A673 (cell line): ENCODE measurements at regions of chr4 and their contacts with region 1.

Region 1: GRCh38 chr4:101321481-101322042 is 25.8 kb downstream of the PPP3CA start:
- DNase-seq: no peak
- H3K4me3 ChIP-seq: no peak overlapping the region
- H3K27ac ChIP-seq: peak overlapping the region; percentile 90
- H3K4me1 ChIP-seq: peaks cover 60% of the 10 kb centered on the region
- H3K27me3 ChIP-seq: no peaks in the 10 kb centered on the region
- CTCF ChIP-seq: no peak

Region 2: DNA sequence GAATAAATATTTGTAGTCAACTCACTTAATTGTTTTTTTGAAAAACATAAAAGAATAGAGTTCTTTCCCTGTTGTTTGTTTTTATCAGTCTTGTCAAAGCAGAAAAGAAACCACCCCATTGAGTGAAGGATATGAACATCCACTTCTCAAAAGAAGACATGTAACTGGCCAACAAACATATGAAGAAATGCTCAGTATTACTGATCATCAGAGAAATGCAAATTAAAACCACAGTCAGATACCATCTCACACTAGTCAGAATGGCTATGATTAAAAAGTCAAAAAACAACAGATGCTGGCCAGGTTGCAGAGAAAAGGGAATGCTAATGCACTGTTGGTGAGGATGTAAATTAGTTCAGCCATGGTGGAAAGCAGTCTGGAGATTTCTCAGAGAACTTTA is 477.7 kb before region 1 on chr4:
- CTCF ChIA-PET with region 1: no interaction called
- POLR2A ChIA-PET with region 1: no interaction called
- intact Hi-C with region 1: no loop called
- DNase-seq: no peak
- H3K4me3 ChIP-seq: no peak overlapping the region
- H3K27ac ChIP-seq: no peak overlapping the region
- H3K4me1 ChIP-seq: no peaks in the 10 kb centered on the region
- H3K27me3 ChIP-seq: no peaks in the 10 kb centered on the region
- CTCF ChIP-seq: no peak

Region 3: GRCh38 chr4:101037938-101038413 is 283.6 kb before region 1 on chr4:
- CTCF ChIA-PET with region 1: no interaction called
- POLR2A ChIA-PET with region 1: no interaction called
- intact Hi-C with region 1: loop called (anchors 5 kb)
- DNase-seq: peak; percentile 97
- H3K4me3 ChIP-seq: no peak overlapping the region
- H3K27ac ChIP-seq: peak overlapping the region; percentile 14
- H3K4me1 ChIP-seq: peaks cover 45% of the 10 kb centered on the region
- H3K27me3 ChIP-seq: no peaks in the 10 kb centered on the region
- CTCF ChIP-seq: no peak

Region 4: DNA sequence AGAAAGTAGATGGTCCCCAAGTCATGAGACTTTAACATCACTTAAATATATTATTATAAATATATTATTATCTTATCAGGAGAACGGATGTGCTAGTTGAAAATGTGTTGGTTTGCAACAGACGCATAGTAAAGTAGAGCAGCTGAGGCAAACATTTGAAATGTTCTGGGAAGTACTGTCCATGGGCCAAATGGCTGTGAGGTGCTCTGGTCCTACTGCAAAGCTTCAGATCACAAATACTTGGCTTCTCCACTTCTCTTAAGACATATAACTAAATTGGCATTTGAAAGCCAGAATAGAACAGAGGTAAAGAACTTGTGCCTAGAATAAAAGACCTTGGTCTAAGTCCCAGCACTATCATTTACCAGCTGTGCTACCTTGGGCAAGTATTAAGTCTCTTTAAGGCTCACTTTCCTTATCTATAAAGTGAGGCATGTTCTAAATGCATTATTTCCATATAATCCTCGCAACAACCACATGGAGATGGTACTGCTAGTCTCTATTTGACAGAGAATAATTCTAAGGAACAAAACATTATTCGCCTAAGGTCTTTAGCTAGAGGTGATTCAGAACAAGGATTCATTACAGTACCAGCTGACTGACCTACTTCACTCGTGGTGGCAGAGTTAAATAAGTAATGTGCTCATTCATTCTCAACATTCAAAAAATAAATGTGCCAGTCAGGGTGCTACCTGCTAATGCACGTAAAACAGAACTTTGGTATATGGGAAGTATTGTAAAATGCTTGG is 271.3 kb before region 1 on chr4:
- CTCF ChIA-PET with region 1: no interaction called
- POLR2A ChIA-PET with region 1: no interaction called
- intact Hi-C with region 1: no loop called
- DNase-seq: no peak
- H3K4me3 ChIP-seq: no peak overlapping the region
- H3K27ac ChIP-seq: no peak overlapping the region
- H3K4me1 ChIP-seq: peaks cover 50% of the 10 kb centered on the region
- H3K27me3 ChIP-seq: no peaks in the 10 kb centered on the region
- CTCF ChIP-seq: no peak

Region 5: DNA sequence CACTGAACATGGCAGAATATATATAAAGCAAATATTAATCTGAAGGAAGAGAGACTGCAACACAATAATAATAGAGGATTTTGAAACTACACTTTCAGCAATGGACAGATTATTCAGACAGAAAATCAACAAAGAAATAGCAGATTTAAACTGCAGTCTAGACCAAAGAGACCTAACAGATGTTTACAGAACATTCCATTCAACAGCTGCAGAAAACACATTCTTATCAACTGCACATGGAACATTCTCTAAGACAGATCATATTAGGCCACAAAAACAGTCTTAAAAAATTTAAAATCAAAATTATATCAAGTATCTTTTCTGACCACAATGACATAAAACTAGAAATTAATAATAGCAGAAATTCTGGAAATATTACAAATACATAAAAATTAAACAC is 1849.4 kb after region 1 on chr4:
- CTCF ChIA-PET with region 1: no interaction called
- POLR2A ChIA-PET with region 1: no interaction called
- intact Hi-C with region 1: no loop called
- DNase-seq: no peak
- H3K4me3 ChIP-seq: no peak overlapping the region
- H3K27ac ChIP-seq: no peak overlapping the region
- H3K4me1 ChIP-seq: no peaks in the 10 kb centered on the region
- H3K27me3 ChIP-seq: no peaks in the 10 kb centered on the region
- CTCF ChIP-seq: no peak